Panc1 (cell line): ENCODE measurements at regions of chr4 and their contacts with region 1.

Region 1: GRCh38 chr4:47836641-47837093 is 1.2 kb downstream of the CORIN start:
- DNase-seq: peak; percentile 18
- ATAC-seq: peak; percentile 97
- H3K4me3 ChIP-seq: peak overlapping the region; percentile 43 to 63
- H3K27ac ChIP-seq: no peak overlapping the region
- H3K4me1 ChIP-seq: no peaks in the 10 kb centered on the region
- H3K27me3 ChIP-seq: no peaks in the 10 kb centered on the region
- CTCF ChIP-seq: peak; percentile 82

Region 2: DNA sequence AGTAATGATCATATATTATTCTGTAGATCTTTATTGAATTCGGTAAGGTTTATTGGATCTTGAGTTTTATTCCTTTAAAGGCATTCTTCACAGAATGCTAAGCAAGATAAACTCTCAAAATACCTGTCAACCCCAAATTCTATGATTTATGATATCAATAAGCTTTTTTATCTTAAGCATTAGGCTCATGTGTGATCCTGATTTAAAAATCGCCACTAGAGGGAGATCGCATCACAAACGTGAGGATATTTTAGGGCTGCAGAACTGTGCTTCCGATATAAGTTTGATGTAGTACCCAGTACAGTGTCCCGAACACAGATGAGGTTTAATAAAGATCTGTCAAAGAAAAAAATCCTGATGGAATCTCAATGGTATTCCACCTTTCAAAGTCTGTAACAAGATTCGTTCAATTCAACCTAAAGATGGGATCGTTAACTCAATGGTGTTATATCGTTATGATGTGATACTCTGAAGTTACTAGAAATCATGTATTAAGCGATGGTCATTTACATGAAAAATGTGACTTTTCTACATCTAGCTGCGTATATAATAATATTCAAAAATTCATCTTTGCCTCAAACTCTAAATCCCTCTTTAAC is 167.8 kb before region 1 on chr4:
- CTCF ChIA-PET with region 1: interaction called, 3 read pairs
- POLR2A ChIA-PET with region 1: no interaction called
- in situ Hi-C with region 1: no loop called
- intact Hi-C with region 1: loop called (anchors 5 kb)
- DNase-seq: peak; percentile 12
- ATAC-seq: peak; percentile 87
- H3K4me3 ChIP-seq: no peak overlapping the region
- H3K27ac ChIP-seq: no peak overlapping the region
- H3K4me1 ChIP-seq: no peaks in the 10 kb centered on the region
- H3K27me3 ChIP-seq: no peaks in the 10 kb centered on the region
- CTCF ChIP-seq: peak; percentile 69; the same call in 1 of the 2 replicates

Region 3: GRCh38 chr4:47686294-47686872 is 150.3 kb before region 1 on chr4:
- CTCF ChIA-PET with region 1: interaction called, 8 read pairs
- POLR2A ChIA-PET with region 1: no interaction called
- in situ Hi-C with region 1: no loop called
- intact Hi-C with region 1: loop called (anchors 5 kb)
- DNase-seq: no peak
- ATAC-seq: peak; percentile 71; the same call in 1 of the 2 replicates
- H3K4me3 ChIP-seq: no peak overlapping the region
- H3K27ac ChIP-seq: no peak overlapping the region
- H3K4me1 ChIP-seq: no peaks in the 10 kb centered on the region
- H3K27me3 ChIP-seq: peaks cover 2% of the 10 kb centered on the region; the same call in 1 of the 2 replicates
- CTCF ChIP-seq: peak; percentile 82

Region 4: GRCh38 chr4:47704693-47705325 is 131.9 kb before region 1 on chr4:
- CTCF ChIA-PET with region 1: interaction called, 12 read pairs
- POLR2A ChIA-PET with region 1: no interaction called
- in situ Hi-C with region 1: no loop called
- intact Hi-C with region 1: loop called (anchors 2 kb)
- DNase-seq: no peak
- ATAC-seq: peak; percentile 83
- H3K4me3 ChIP-seq: no peak overlapping the region
- H3K27ac ChIP-seq: no peak overlapping the region
- H3K4me1 ChIP-seq: no peaks in the 10 kb centered on the region
- H3K27me3 ChIP-seq: no peaks in the 10 kb centered on the region
- CTCF ChIP-seq: peak; percentile 57